PC-3 (cell line): ENCODE measurements at regions of chr6 and their contacts with region 1.

Region 1: GRCh38 chr6:109336221-109336961 is 45.9 kb downstream of the CD164 start:
- DNase-seq: peak; percentile 97
- ATAC-seq: peak; percentile 95
- H3K4me3 ChIP-seq: no peak overlapping the region
- H3K27ac ChIP-seq: peak overlapping the region; percentile 96
- H3K4me1 ChIP-seq: peaks cover 23% of the 10 kb centered on the region
- H3K27me3 ChIP-seq: no peaks in the 10 kb centered on the region
- CTCF ChIP-seq: no peak

Region 2: DNA sequence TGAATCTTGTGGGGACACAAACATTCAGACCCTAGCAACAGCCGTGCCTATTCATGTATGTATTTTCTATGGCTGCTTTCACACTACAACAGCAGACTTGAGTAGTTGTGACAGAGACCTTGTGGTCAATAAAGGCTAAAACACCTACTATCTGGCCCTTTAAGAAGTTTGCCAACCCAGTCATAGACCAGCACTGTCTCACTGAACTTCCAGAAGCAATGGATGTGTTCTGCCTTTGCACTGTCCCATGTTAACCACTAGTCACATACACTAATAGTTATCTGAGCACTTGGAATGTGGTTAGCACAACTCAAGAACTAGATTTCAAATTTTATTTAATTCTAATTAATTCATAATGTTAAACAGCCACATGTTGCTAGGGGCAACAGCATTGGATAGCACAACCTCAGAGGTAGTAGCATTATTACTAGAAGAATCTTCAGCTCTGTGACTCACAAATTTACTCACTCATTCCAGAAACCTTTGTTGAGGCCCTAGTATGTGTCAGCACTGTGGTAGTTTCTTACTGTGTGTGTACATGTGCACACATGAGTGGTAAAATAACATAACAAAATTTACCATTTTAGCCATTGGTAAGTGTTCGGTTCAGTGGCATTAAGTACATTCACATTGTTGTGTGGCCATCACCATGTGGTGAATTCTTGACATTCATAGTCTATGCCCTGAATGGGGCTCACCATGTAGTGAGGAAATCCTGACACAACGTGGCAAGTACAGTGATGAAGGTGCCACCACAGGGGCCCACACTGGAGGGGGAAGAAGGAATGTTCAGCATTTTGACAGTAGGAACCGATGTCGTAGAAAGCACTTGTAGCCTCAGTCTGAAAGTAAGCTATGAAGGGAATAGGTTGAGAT is 133.7 kb before region 1 on chr6:
- CTCF ChIA-PET with region 1: no interaction called
- POLR2A ChIA-PET with region 1: no interaction called
- intact Hi-C with region 1: loop called (anchors 1 kb)
- DNase-seq: peak; percentile 36
- ATAC-seq: no peak
- H3K4me3 ChIP-seq: no peak overlapping the region
- H3K27ac ChIP-seq: peak overlapping the region; percentile 45
- H3K4me1 ChIP-seq: peaks cover 22% of the 10 kb centered on the region
- H3K27me3 ChIP-seq: no peaks in the 10 kb centered on the region
- CTCF ChIP-seq: no peak

Region 3: DNA sequence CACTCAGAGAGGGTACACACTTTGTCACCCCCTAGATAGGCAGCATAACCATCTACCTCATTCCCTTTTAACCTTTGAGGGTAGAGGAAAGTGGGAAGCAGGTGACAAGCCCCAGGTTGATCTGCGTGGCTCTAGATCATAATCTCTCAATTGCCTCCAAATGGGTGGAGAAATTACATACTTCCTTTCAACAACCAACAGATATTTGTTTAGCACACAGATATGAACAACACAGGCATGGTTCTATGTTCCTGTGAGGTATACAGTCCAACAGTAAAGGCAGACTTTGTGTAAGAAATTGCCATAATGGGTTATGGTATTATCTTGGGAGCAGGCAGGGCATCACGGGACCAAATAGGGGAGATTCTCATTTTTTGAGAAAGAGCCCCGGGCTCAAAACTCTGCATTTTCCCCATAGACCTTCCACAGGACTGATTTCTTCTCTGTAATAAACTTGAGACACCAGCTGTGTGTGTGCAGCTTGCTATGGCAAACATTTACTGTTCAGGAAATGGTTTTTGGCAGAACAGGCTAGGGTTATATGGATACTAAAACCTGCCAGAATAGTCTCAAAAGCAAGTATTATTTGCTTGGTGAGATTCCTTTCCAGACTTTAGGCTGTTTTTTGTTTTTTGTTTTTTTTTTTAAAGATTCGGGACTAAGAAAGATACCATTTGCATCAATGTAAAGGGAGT is 80.3 kb before region 1 on chr6:
- CTCF ChIA-PET with region 1: no interaction called
- POLR2A ChIA-PET with region 1: no interaction called
- intact Hi-C with region 1: loop called (anchors 5 kb)
- DNase-seq: peak; percentile 31
- ATAC-seq: peak; percentile 74
- H3K4me3 ChIP-seq: no peak overlapping the region
- H3K27ac ChIP-seq: peak overlapping the region; percentile 46
- H3K4me1 ChIP-seq: peaks cover 43% of the 10 kb centered on the region
- H3K27me3 ChIP-seq: no peaks in the 10 kb centered on the region
- CTCF ChIP-seq: no peak

Region 4: GRCh38 chr6:109299776-109300564 is 36.4 kb before region 1 on chr6:
- CTCF ChIA-PET with region 1: no interaction called
- POLR2A ChIA-PET with region 1: no interaction called
- intact Hi-C with region 1: loop called (anchors 5 kb)
- DNase-seq: no peak
- ATAC-seq: peak; percentile 39
- H3K4me3 ChIP-seq: no peak overlapping the region
- H3K27ac ChIP-seq: no peak overlapping the region
- H3K4me1 ChIP-seq: peaks cover 12% of the 10 kb centered on the region; the same call in 1 of the 2 replicates
- H3K27me3 ChIP-seq: no peaks in the 10 kb centered on the region
- CTCF ChIP-seq: no peak

Region 5: GRCh38 chr6:109382576-109383437 is 46.4 kb after region 1 on chr6:
- CTCF ChIA-PET with region 1: no interaction called
- POLR2A ChIA-PET with region 1: no interaction called
- intact Hi-C with region 1: loop called (anchors 2 kb)
- DNase-seq: peak; percentile 83
- ATAC-seq: peak; percentile 68
- H3K4me3 ChIP-seq: peak overlapping the region; percentile 95
- H3K27ac ChIP-seq: peak overlapping the region; percentile 84
- H3K4me1 ChIP-seq: peaks cover 28% of the 10 kb centered on the region
- H3K27me3 ChIP-seq: no peaks in the 10 kb centered on the region
- CTCF ChIP-seq: peak; percentile 69